ENCODE measurements at regions of chr15 and their contacts with region 1.

Region 1: DNA sequence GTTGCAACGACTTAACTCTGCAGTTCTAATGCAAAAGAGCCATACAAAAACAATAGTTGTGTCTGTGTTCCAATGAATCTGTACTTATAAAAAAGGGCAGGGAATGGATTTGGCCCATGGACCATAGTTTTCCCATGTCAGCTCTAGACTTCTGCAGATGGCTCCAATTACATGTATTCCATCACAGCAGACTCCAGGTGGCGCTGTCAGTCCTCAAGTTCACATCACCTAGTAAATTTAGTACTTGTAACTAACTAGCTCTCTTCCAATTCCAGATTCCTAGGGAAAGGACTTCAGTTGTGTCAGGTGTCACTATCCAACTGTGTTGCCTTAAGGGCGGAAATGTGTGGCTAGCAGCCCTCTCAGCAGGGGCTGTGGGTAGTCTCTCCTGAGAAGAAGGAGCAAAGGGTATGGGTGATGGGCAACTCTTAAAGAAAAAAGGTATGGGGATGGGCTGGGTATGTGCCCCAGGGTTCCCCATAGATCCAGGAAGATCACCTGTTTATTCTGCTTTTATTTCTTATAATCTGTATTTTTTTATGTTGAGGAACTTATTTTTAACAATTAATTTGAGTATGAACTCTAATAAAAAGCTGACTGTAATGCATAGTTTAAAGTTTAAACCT is 36.2 kb downstream of the BBS4 start:
- DNase-seq: peak; percentile 74
- H3K4me3 Mint-ChIP-seq: no peak overlapping the region
- H3K27ac Mint-ChIP-seq: no peak overlapping the region
- H3K4me1 Mint-ChIP-seq: peaks cover 6% of the 10 kb centered on the region
- H3K27me3 Mint-ChIP-seq: no peaks in the 10 kb centered on the region
- CTCF ChIP-seq: peak; percentile 84

Region 2: GRCh38 chr15:73273181-73274002 is 551.2 kb after region 1 on chr15:
- CTCF ChIA-PET with region 1: interaction called, 6 read pairs
- intact Hi-C with region 1: loop called (anchors 5 kb)
- DNase-seq: peak; percentile 62
- H3K4me3 Mint-ChIP-seq: no peak overlapping the region
- H3K27ac Mint-ChIP-seq: no peak overlapping the region
- H3K4me1 Mint-ChIP-seq: no peaks in the 10 kb centered on the region
- H3K27me3 Mint-ChIP-seq: no peaks in the 10 kb centered on the region
- CTCF ChIP-seq: peak; percentile 83

Measured in Calu3 (cell line).